Activated T-helper 1 cell treated with anti-CD3 and anti-CD28 coated beads, Interleukin-12 subunit alpha, Interleukin-12 subunit beta, Interleukin-2, Interleukin-4 antibody, amounts not matched to agents 30 ng/mL and 10 ng/mL and 1 ng/mL, durations not matched to agents 14 hours and 24 hours and 36 hours (primary cell): ENCODE measurements at regions of chr1 and their contacts with region 1.

Region 1: GRCh38 chr1:154558575-154559465 is at the start of gene UBE2Q1:
- DNase-seq: peak; percentile 99
- H3K4me3 Mint-ChIP-seq: peak within 1 kb of the TSS; percentile 96
- H3K27ac Mint-ChIP-seq: peak within 1 kb of the TSS; percentile 92
- H3K4me1 Mint-ChIP-seq: peaks cover 49% of the 10 kb centered on the region
- H3K27me3 Mint-ChIP-seq: no peaks in the 10 kb centered on the region
- total RNA-seq, gene UBE2Q1: 93.3 and 106 TPM in 2 replicates

Region 2: DNA sequence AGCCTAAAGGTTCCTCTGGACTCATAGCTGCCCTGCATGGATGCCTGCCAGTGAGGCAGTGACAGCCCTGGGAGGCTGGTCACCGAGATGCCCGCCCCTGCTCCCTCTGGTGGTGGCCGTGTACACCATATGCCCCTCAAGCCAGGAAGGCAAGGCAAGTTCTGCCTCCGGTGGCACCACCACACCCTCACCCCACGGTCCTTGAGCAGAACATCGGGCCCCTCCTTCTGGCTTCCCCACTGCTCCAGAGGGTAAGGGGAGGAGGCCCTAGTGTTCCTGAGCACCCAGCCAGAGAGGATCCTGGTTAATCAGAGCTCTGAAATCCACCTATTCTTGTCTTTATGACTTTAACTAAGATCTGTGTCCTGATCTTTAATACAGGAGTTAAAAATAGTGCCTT is 941.1 kb before region 1 on chr1:
- intact Hi-C with region 1: no loop called
- DNase-seq: peak; percentile 63
- H3K4me3 Mint-ChIP-seq: no peak overlapping the region
- H3K27ac Mint-ChIP-seq: no peak overlapping the region
- H3K4me1 Mint-ChIP-seq: peaks cover 8% of the 10 kb centered on the region
- H3K27me3 Mint-ChIP-seq: no peaks in the 10 kb centered on the region

Region 3: GRCh38 chr1:154220071-154220969 is 338.5 kb before region 1 on chr1 and contains the start of gene UBAP2L:
- intact Hi-C with region 1: loop called (anchors 2 kb)
- DNase-seq: peak; percentile 99
- H3K4me3 Mint-ChIP-seq: peak within 1 kb of the TSS; percentile 97
- H3K27ac Mint-ChIP-seq: peak within 1 kb of the TSS; percentile 99
- H3K4me1 Mint-ChIP-seq: peaks cover 62% of the 10 kb centered on the region
- H3K27me3 Mint-ChIP-seq: no peaks in the 10 kb centered on the region
- total RNA-seq, gene UBAP2L: 258 and 284 TPM in 2 replicates

Region 4: GRCh38 chr1:154607609-154608396 is 49.0 kb after region 1 on chr1 and contains the start of gene ADAR:
- intact Hi-C with region 1: loop called (anchors 1 kb)
- DNase-seq: peak; percentile 93
- H3K4me3 Mint-ChIP-seq: peak within 1 kb of the TSS; percentile 94
- H3K27ac Mint-ChIP-seq: peak within 1 kb of the TSS; percentile 98
- H3K4me1 Mint-ChIP-seq: peaks cover 68% of the 10 kb centered on the region
- H3K27me3 Mint-ChIP-seq: no peaks in the 10 kb centered on the region
- total RNA-seq, gene ADAR: 299 and 301 TPM in 2 replicates

Region 5: DNA sequence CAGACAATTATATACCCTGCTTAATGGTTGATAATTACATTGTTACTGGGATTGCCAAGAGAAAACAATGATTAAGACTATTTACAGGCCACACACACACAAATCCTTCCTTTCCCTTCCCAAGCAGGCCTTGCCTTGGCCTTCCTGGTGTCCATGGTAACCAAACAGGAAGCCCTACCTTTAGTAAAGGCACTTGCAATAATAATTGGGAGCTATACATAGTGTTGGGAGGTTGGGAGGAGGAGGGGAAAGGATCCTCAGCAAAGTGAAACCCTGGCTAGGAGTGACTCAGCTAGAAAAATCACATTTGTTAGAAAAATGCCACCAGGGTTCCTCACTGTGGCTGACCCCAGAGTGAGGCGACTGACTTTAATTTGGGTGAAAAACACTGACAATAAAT is 171.4 kb after region 1 on chr1:
- intact Hi-C with region 1: no loop called
- DNase-seq: no peak
- H3K4me3 Mint-ChIP-seq: no peak overlapping the region
- H3K27ac Mint-ChIP-seq: no peak overlapping the region
- H3K4me1 Mint-ChIP-seq: peaks cover 65% of the 10 kb centered on the region
- H3K27me3 Mint-ChIP-seq: peaks cover 2% of the 10 kb centered on the region

Region 6: DNA sequence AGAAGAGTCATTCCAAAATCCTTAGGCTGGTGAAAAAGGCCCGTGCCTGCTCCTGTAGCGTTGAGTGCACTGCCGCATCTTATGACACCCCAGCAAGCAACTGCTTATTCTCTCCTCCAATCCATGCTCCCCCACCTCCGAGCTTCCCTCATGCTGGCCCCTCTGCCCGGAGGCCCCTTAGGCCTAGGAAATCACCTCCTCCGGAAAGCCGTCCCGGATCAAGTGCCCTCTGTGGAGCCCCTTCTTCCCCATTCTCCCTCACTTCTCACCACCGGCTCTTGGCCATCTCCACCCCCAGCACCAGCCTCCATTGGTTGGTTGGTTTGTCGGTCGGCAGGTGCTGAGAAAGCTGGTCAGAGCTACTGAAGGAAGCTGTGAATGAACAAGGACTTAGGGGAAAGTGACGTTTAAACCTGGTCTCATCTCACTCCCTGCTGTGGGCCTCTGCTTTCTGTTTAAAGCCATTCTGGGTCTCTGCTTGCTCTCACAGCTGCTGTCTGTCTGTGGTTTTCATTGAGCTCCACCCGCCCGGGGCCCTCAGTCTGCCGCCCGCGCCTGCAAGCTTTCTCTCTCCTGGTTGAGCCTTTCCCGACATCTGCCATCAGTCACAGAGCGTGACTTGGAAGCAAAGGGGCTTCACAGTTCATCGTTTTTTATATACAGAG is 189.1 kb after region 1 on chr1:
- intact Hi-C with region 1: loop called (anchors 1 kb)
- DNase-seq: peak; percentile 59
- H3K4me3 Mint-ChIP-seq: peak overlapping the region; percentile 85
- H3K27ac Mint-ChIP-seq: peak overlapping the region; percentile 94
- H3K4me1 Mint-ChIP-seq: peaks cover 82% of the 10 kb centered on the region
- H3K27me3 Mint-ChIP-seq: peaks cover 7% of the 10 kb centered on the region

Region 7: GRCh38 chr1:154878371-154879022 is 319.7 kb after region 1 on chr1:
- intact Hi-C with region 1: loop called (anchors 1 kb)
- DNase-seq: peak; percentile 64
- H3K4me3 Mint-ChIP-seq: no peak overlapping the region
- H3K27ac Mint-ChIP-seq: no peak overlapping the region
- H3K4me1 Mint-ChIP-seq: peaks cover 18% of the 10 kb centered on the region
- H3K27me3 Mint-ChIP-seq: peaks cover 7% of the 10 kb centered on the region

Region 8: GRCh38 chr1:154974063-154974807 is 415.4 kb after region 1 on chr1 and contains the start of gene CKS1B:
- intact Hi-C with region 1: loop called (anchors 1 kb)
- DNase-seq: peak; percentile 95
- H3K4me3 Mint-ChIP-seq: no peak within 1 kb of the TSS
- H3K27ac Mint-ChIP-seq: no peak within 1 kb of the TSS
- H3K4me1 Mint-ChIP-seq: peaks cover 36% of the 10 kb centered on the region
- H3K27me3 Mint-ChIP-seq: no peaks in the 10 kb centered on the region
- total RNA-seq, gene CKS1B: 151 and 158 TPM in 2 replicates

Region 9: GRCh38 chr1:155063550-155064110 is 504.8 kb after region 1 on chr1 and contains the start of gene EFNA4:
- intact Hi-C with region 1: loop called (anchors 2 kb)
- DNase-seq: peak; percentile 83
- H3K4me3 Mint-ChIP-seq: peak within 1 kb of the TSS; percentile 93
- H3K27ac Mint-ChIP-seq: peak within 1 kb of the TSS; percentile 79
- H3K4me1 Mint-ChIP-seq: peaks cover 31% of the 10 kb centered on the region
- H3K27me3 Mint-ChIP-seq: no peaks in the 10 kb centered on the region
- total RNA-seq, gene EFNA4: 5.7 and 6.8 TPM in 2 replicates

Region 10: DNA sequence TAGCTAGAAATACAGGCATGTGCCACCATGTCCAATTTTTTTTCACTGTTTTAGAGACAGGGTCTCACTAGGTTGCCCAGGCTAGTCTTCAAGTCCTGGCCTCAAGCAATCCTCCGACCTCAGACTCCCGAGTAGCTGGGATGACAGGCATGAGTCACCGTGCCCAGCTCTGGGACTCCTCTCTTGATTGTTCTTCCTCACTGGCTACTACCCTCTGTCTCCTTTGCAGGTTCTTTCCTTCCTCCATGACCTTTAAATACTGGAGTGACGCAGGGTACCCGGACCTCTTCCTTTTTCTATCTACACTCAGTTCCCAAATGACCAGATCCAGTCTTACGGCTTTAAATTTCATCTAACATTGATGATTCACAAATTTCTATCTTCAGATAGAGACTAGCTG is 968.9 kb after region 1 on chr1:
- intact Hi-C with region 1: no loop called
- DNase-seq: no peak
- H3K4me3 Mint-ChIP-seq: no peak overlapping the region
- H3K27ac Mint-ChIP-seq: no peak overlapping the region
- H3K4me1 Mint-ChIP-seq: peaks cover 30% of the 10 kb centered on the region
- H3K27me3 Mint-ChIP-seq: no peaks in the 10 kb centered on the region